Heart left ventricle (tissue), 16 donors: ENCODE measurements at regions of chr2 and their contacts with region 1.

Region 1: GRCh38 chr2:164737612-164738081 is 104.0 kb downstream of the COBLL1 start:
- DNase-seq: peak; percentile 40 to 67 (median 56)
- ATAC-seq: peak; percentile 43 to 85 (median 81)
- H3K4me3 ChIP-seq: no peak overlapping the region
- H3K27ac ChIP-seq: no peak overlapping the region
- H3K4me1 ChIP-seq: peaks cover 0 to 50% (median 21%) of the 10 kb centered on the region in 12 donors
- H3K27me3 ChIP-seq: no peaks in the 10 kb centered on the region
- CTCF ChIP-seq: peak; percentile 55 to 82 (median 72)
- POLR2A ChIP-seq: no peak

Region 2: GRCh38 chr2:164574925-164575324 is 162.7 kb before region 1 on chr2:
- intact Hi-C with region 1: no loop called
- DNase-seq: no peak
- ATAC-seq: no peak
- H3K4me3 ChIP-seq: no peak overlapping the region
- H3K27ac ChIP-seq: no peak overlapping the region
- H3K4me1 ChIP-seq: peaks cover 0 to 4% (median 0%) of the 10 kb centered on the region in 12 donors
- H3K27me3 ChIP-seq: no peaks in the 10 kb centered on the region
- CTCF ChIP-seq: no peak
- POLR2A ChIP-seq: no peak

Region 3: DNA sequence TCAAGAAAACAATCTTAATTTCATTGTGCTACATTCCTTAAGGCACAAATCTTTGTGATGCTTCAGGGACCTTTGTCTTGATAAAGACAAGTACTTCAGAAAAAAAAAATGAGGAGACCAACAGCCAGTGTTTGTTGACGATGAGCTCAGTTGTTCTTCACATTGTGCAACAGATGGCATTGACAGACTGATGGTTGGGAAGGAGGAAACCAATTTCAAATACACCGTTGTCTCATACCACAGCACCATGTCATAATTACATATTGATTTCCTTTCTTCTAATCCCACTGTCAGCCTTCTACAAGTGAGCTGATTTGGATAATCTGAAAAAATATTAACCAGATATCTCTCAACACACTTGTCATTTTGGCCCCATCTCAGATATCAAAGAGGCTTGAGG is 62.6 kb before region 1 on chr2:
- intact Hi-C with region 1: no loop called
- DNase-seq: no peak
- ATAC-seq: peak in 1 of 4 donors; percentile 28
- H3K4me3 ChIP-seq: no peak overlapping the region
- H3K27ac ChIP-seq: peak overlapping the region in 4 of 12 donors; percentile 18 to 52 (median 42)
- H3K4me1 ChIP-seq: peaks cover 0 to 17% (median 0%) of the 10 kb centered on the region in 12 donors
- H3K27me3 ChIP-seq: no peaks in the 10 kb centered on the region
- CTCF ChIP-seq: no peak
- POLR2A ChIP-seq: no peak

Region 4: GRCh38 chr2:164792316-164793178 is 54.9 kb after region 1 on chr2:
- intact Hi-C with region 1: no loop called
- DNase-seq: no peak
- ATAC-seq: peak in 1 of 4 donors; percentile 17
- H3K4me3 ChIP-seq: no peak overlapping the region
- H3K27ac ChIP-seq: peak overlapping the region in 11 of 12 donors; percentile 3 to 74 (median 61)
- H3K4me1 ChIP-seq: peaks cover 0 to 60% (median 31%) of the 10 kb centered on the region in 12 donors
- H3K27me3 ChIP-seq: no peaks in the 10 kb centered on the region
- CTCF ChIP-seq: no peak
- POLR2A ChIP-seq: no peak

Region 5: DNA sequence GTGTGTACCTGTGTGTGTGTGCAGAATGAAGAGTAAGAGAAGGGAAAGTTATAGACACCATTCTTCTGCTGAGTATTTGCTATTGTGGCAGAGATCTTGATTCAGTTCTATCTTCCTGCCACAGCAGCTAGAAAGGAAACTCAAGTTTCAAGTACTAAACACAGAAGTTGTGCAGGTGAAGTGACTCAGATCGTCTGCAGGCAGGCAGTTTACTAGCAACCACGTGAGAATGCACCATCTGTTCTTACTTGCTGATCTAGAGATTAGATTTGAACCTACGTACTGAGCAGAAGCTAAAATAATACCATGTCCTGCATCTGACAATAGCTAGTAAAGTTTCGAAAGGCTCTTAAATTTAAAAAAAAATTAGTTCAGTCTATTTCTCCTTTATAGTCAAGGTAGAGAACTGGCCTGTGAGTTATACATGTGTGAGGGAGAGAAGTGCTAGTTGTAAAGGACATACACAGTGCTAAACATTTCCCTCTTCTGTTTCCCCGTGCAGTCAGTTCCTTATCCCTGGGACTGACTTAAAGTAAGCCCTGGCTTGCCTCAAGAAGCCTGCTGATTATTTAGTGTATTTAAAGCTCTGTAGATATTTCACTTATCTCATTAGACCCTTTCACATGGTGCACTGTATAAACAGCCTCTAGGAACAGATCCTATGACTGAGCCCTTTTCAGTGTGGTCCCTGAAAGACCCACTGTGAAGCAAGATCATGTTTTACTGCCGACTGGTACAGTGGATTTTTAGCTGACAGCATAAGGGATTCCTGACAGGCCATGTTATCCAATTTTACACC is 172.7 kb after region 1 on chr2:
- intact Hi-C with region 1: loop called in 2 of 10 experiments (anchors 1 to 2 kb)
- DNase-seq: no peak
- ATAC-seq: peak in 3 of 4 donors; percentile 46 to 62 (median 50)
- H3K4me3 ChIP-seq: peak overlapping the region in 1 of 12 donors; percentile 11
- H3K27ac ChIP-seq: peak overlapping the region in 5 of 12 donors; percentile 4 to 57 (median 32)
- H3K4me1 ChIP-seq: peaks cover 0 to 49% (median 13%) of the 10 kb centered on the region in 12 donors
- H3K27me3 ChIP-seq: no peaks in the 10 kb centered on the region
- CTCF ChIP-seq: no peak
- POLR2A ChIP-seq: no peak

Region 6: DNA sequence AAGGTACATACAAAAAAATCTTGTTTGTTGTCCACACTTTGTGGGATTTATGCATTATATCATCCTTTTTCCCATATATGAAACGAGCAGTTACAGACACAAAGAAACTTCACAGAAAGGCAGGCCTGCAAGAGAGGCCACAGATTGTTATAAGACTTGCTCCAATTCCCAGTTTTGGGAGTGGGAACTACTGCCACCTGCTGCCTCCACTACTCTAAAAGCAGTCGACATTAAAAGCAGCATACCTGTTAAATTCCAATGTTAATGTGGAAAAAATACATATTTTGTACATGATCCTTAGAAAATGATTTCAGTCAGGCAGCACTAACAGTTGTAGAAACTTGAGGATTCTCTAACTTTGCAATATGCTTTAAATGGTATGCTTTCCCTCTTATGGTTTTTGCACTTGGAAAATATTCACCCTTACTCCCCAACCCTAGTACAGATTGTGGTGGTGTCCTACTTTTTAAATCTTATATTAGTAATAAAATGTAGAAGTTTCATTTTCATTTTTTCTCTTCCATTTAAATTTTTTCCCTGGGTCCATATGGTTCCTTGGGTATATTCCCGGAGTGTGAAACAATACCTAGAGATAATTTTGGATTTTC is 179.8 kb after region 1 on chr2:
- intact Hi-C with region 1: loop called (anchors 1 to 2 kb)
- DNase-seq: peak; percentile 34 to 52 (median 37)
- ATAC-seq: peak in 3 of 4 donors; percentile 62 to 70 (median 66)
- H3K4me3 ChIP-seq: no peak overlapping the region
- H3K27ac ChIP-seq: no peak overlapping the region
- H3K4me1 ChIP-seq: peaks cover 0 to 20% (median 5%) of the 10 kb centered on the region in 12 donors
- H3K27me3 ChIP-seq: no peaks in the 10 kb centered on the region
- CTCF ChIP-seq: peak; percentile 39 to 78 (median 64)
- POLR2A ChIP-seq: no peak

Region 7: GRCh38 chr2:165203689-165204559 is 466.3 kb after region 1 on chr2 and contains the start of gene SCN3A:
- intact Hi-C with region 1: loop called in 1 of 10 experiments (anchors 10 kb)
- DNase-seq: peak in 1 of 5 donors; percentile 23
- ATAC-seq: no peak
- H3K4me3 ChIP-seq: peak within 1 kb of the TSS in 8 of 12 donors; percentile 2 to 46 (median 32)
- H3K27ac ChIP-seq: no peak within 1 kb of the TSS
- H3K4me1 ChIP-seq: no peaks in the 10 kb centered on the region
- H3K27me3 ChIP-seq: no peaks in the 10 kb centered on the region
- CTCF ChIP-seq: peak; percentile 50 to 80 (median 62)
- POLR2A ChIP-seq: no peak
- total RNA-seq, gene SCN3A: 0.56 to 2.7 (median 1.1) TPM